ENCODE measurements at regions of chr3 and their contacts with region 1.

Region 1: DNA sequence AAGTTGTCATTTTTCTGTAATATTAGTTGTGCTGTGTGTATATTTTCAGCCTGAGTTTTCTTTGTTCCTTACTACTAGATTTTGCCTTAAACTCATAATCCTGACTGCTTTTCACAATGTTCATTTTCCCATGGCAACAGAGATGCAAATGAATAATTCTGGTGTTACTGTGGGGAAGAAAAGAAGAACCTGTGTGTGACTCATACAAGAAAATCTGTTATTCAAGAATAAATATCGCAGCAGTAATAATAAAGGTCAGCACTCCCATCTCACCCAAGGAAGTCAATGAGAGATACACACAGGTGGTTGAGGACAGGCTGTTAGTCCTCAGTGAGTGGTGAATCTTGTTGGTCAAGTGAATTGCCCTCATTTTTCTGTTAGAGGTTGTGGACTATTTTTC is 656.6 kb upstream of the NAALADL2 start:
- DNase-seq: peak; percentile 61
- H3K4me3 ChIP-seq: no peak overlapping the region
- H3K27ac ChIP-seq: no peak overlapping the region
- H3K4me1 ChIP-seq: peaks cover 17% of the 10 kb centered on the region
- H3K27me3 ChIP-seq: no peaks in the 10 kb centered on the region
- CTCF ChIP-seq: no peak
- POLR2A ChIP-seq: no peak

Region 2: GRCh38 chr3:174440741-174441587 is 238.4 kb after region 1 on chr3:
- CTCF ChIA-PET with region 1: no interaction called
- POLR2A ChIA-PET with region 1: no interaction called
- dilution Hi-C with region 1: no loop called
- intact Hi-C with region 1: loop called (anchors 5 kb)
- DNase-seq: peak; percentile 90
- H3K4me3 ChIP-seq: peak overlapping the region; percentile 74 to 91 (median 78)
- H3K27ac ChIP-seq: peak overlapping the region; percentile 90
- H3K4me1 ChIP-seq: peaks cover 21% of the 10 kb centered on the region
- H3K27me3 ChIP-seq: no peaks in the 10 kb centered on the region
- CTCF ChIP-seq: no peak
- POLR2A ChIP-seq: peak; percentile 39

Measured in endothelial cell of umbilical vein (primary cell).